Endothelial cell of umbilical vein (primary cell): ENCODE measurements at regions of chr17 and their contacts with region 1.

Region 1: DNA sequence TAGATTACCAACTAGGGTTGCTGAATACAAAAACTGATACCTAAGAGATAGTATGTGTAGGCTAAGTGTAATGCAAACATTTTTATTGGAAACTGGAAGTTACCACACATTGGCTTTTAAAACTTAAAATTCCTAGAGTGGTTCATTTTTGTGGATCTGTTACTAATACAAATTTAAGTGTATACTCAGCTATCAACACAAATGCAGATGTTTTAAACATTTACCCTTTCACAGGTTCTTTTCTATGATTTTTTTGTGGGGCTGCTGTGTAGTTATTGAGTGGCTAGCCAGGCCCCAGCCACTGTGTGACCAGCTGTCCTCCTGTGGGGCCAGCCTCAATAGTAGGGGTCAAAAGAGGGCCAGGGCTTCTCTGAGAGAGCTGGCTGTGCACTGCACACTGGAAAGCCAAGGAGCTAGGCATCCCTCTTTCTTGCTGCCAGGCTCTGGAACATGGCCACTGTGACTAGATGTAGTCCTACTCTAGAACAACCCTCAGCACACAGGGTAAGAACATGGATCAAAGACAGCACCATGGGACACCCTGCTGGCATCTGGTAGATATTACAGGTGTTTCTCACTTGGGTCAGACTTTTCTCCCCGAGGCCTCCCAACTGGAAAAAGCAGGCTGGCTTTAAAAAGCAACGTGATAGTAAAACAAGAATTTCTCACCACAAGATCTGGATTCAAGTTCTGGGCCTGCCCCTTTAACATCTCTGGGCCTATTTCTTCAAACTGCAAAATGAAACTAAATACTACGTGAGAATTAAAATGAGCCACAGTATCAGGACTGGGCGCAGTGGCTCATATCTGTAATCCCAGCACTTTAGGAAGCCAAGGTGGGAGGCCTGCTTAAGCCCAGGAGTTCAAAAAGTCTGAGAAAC is 7.3 kb upstream of the VEZF1 start:
- DNase-seq: peak; percentile 82
- H3K4me3 ChIP-seq: no peak overlapping the region
- H3K27ac ChIP-seq: no peak overlapping the region
- H3K4me1 ChIP-seq: peaks cover 20% of the 10 kb centered on the region
- H3K27me3 ChIP-seq: no peaks in the 10 kb centered on the region
- CTCF ChIP-seq: peak; percentile 71 to 72
- POLR2A ChIP-seq: no peak

Region 2: DNA sequence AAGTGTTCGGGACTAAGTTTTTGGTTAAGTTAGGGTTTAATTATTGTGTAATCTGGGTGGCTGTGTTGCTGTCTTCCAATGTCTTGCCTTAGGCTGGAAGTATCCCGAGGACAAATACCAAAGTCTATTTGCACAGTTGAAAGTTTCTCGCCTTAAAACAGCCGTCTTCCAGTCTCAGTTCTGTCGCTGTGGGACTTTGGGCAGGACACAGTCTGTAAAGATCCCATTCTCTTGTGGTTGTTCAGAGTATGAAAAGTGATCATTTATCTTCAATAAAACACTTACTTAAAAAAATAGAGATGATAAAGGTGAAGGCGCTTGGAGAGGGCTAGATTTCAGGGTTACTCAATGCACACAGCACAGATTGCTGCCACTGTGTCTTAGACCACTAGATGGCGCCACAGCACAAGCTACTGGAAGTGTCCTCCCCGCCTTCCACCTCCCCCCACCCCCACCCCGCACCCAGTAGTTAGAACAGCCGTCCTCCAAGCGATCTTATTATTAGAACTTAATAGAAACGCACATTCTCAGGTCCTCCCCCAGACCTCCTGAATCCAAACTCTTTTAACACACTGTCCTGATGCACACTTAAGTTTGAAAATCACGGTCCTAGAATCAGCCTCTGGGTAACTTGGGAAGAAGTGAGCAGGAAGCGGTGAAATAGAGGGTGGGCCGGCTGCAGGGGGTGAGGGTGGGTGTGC is 864.4 kb before region 1 on chr17:
- CTCF ChIA-PET with region 1: interaction called, 3 read pairs
- POLR2A ChIA-PET with region 1: no interaction called
- dilution Hi-C with region 1: no loop called
- intact Hi-C with region 1: loop called (anchors 1 kb)
- DNase-seq: peak; percentile 57
- H3K4me3 ChIP-seq: no peak overlapping the region
- H3K27ac ChIP-seq: no peak overlapping the region
- H3K4me1 ChIP-seq: no peaks in the 10 kb centered on the region
- H3K27me3 ChIP-seq: no peaks in the 10 kb centered on the region
- CTCF ChIP-seq: peak; percentile 46 to 85
- POLR2A ChIP-seq: no peak

Region 3: GRCh38 chr17:57783106-57783742 is 212.1 kb before region 1 on chr17:
- CTCF ChIA-PET with region 1: interaction called, 11 read pairs
- POLR2A ChIA-PET with region 1: no interaction called
- dilution Hi-C with region 1: no loop called
- intact Hi-C with region 1: no loop called
- DNase-seq: peak; percentile 59
- H3K4me3 ChIP-seq: no peak overlapping the region
- H3K27ac ChIP-seq: no peak overlapping the region
- H3K4me1 ChIP-seq: no peaks in the 10 kb centered on the region
- H3K27me3 ChIP-seq: peaks cover 15 to 21% of the 10 kb centered on the region in 2 experiments
- CTCF ChIP-seq: peak; percentile 95 to 99
- POLR2A ChIP-seq: no peak

Region 4: GRCh38 chr17:57803025-57803424 is 192.3 kb before region 1 on chr17:
- CTCF ChIA-PET with region 1: no interaction called
- POLR2A ChIA-PET with region 1: no interaction called
- dilution Hi-C with region 1: no loop called
- intact Hi-C with region 1: no loop called
- DNase-seq: no peak
- H3K4me3 ChIP-seq: no peak overlapping the region
- H3K27ac ChIP-seq: no peak overlapping the region
- H3K4me1 ChIP-seq: no peaks in the 10 kb centered on the region
- H3K27me3 ChIP-seq: peaks cover 0 to 2% of the 10 kb centered on the region in 2 experiments
- CTCF ChIP-seq: no peak
- POLR2A ChIP-seq: no peak

Region 5: DNA sequence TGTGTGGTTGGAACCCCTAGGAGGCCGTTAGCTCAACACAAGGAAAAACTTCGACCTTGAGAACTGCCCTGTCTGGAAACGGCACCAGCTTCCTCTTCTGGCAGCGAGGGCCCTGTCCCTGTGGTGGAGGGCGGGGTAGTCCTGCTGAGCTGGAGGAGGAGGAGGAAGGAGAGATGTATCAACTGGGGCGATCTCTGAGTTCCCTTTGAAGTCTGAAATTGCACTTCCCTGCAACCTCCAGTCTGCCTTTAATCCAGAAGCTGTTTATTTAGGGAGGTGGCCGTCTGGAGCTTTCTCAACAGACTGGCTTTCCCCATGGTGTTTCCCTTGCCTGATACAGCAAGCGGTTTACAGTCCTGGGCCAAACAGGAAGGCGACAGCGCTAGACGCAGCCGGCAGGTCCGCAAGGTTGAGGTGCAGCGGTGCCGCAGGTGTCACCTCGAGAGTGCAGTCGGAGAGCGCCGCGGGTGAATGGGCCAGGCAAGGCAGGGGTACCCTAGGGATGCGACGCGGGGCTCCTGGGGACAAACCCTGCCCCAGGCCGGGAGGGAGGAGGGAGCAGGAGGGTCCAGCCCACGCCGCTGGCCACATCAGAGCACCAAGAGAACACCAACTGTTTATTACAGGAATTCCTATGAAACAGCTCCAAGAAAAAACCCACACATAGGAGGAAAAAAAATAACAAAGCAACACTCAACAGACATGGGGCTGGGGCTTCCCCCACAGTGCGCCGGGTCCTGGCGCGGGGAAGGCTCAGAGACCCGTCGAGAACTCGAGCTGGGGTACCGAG is 134.1 kb before region 1 on chr17:
- CTCF ChIA-PET with region 1: interaction called, 584 read pairs
- POLR2A ChIA-PET with region 1: interaction called, 8 read pairs
- dilution Hi-C with region 1: loop called (anchors 25 kb)
- intact Hi-C with region 1: loop called (anchors 1 kb)
- DNase-seq: peak; percentile 30
- H3K4me3 ChIP-seq: peak overlapping the region; percentile 21 to 49 (median 31)
- H3K27ac ChIP-seq: no peak overlapping the region
- H3K4me1 ChIP-seq: peaks cover 17% of the 10 kb centered on the region
- H3K27me3 ChIP-seq: no peaks in the 10 kb centered on the region
- CTCF ChIP-seq: no peak
- POLR2A ChIP-seq: no peak

Region 6: GRCh38 chr17:57892146-57892828 is 103.0 kb before region 1 on chr17:
- CTCF ChIA-PET with region 1: interaction called, 23 read pairs
- POLR2A ChIA-PET with region 1: no interaction called
- dilution Hi-C with region 1: no loop called
- intact Hi-C with region 1: loop called (anchors 1 kb)
- DNase-seq: peak; percentile 87
- H3K4me3 ChIP-seq: no peak overlapping the region
- H3K27ac ChIP-seq: peak overlapping the region; percentile 70
- H3K4me1 ChIP-seq: peaks cover 26% of the 10 kb centered on the region
- H3K27me3 ChIP-seq: no peaks in the 10 kb centered on the region
- CTCF ChIP-seq: peak; percentile 99
- POLR2A ChIP-seq: no peak

Region 7: GRCh38 chr17:57955183-57955931 is 40.0 kb before region 1 on chr17 and contains the start of gene CUEDC1:
- CTCF ChIA-PET with region 1: interaction called, 15 read pairs
- POLR2A ChIA-PET with region 1: interaction called, 5 read pairs
- dilution Hi-C with region 1: no loop called
- intact Hi-C with region 1: no loop called
- DNase-seq: peak; percentile 56
- H3K4me3 ChIP-seq: peak within 1 kb of the TSS; percentile 57 to 88 (median 77)
- H3K27ac ChIP-seq: peak within 1 kb of the TSS; percentile 44
- H3K4me1 ChIP-seq: peaks cover 36% of the 10 kb centered on the region
- H3K27me3 ChIP-seq: peaks cover 2 to 7% of the 10 kb centered on the region in 2 experiments
- CTCF ChIP-seq: peak in 1 of 2 donors; percentile 43
- POLR2A ChIP-seq: peak; percentile 23
- total RNA-seq, gene CUEDC1: 27.7 and 28.5 TPM in 2 replicates

Region 8: GRCh38 chr17:58112970-58113631 is 117.8 kb after region 1 on chr17:
- CTCF ChIA-PET with region 1: interaction called, 31 read pairs
- POLR2A ChIA-PET with region 1: no interaction called
- dilution Hi-C with region 1: no loop called
- intact Hi-C with region 1: loop called (anchors 1 kb)
- DNase-seq: peak; percentile 69
- H3K4me3 ChIP-seq: no peak overlapping the region
- H3K27ac ChIP-seq: no peak overlapping the region
- H3K4me1 ChIP-seq: no peaks in the 10 kb centered on the region
- H3K27me3 ChIP-seq: peaks cover 4 to 5% of the 10 kb centered on the region in 2 experiments
- CTCF ChIP-seq: peak; percentile 84 to 89
- POLR2A ChIP-seq: no peak